Prostate gland (tissue), 2 donors: ENCODE measurements at regions of chr4 and their contacts with region 1.

Region 1: GRCh38 chr4:55020106-55020505 is 105.3 kb downstream of the KDR start:
- DNase-seq: no peak
- H3K4me3 ChIP-seq: no peak overlapping the region
- H3K27ac ChIP-seq: no peak overlapping the region
- H3K4me1 ChIP-seq: no peaks in the 10 kb centered on the region
- H3K27me3 ChIP-seq: no peaks in the 10 kb centered on the region
- CTCF ChIP-seq: no peak
- POLR2A ChIP-seq: no peak

Region 2: GRCh38 chr4:53377319-53378170 is 1642.6 kb before region 1 on chr4 and contains the start of gene FIP1L1:
- intact Hi-C with region 1: loop called (anchors 10 kb)
- DNase-seq: peak; percentile 94
- H3K4me3 ChIP-seq: peak within 1 kb of the TSS; percentile 87 to 93
- H3K27ac ChIP-seq: peak within 1 kb of the TSS; percentile 83 to 87
- H3K4me1 ChIP-seq: peaks cover 3% of the 10 kb centered on the region
- H3K27me3 ChIP-seq: no peaks in the 10 kb centered on the region
- CTCF ChIP-seq: peak in 2 of 4 experiments; percentile 24 to 30
- POLR2A ChIP-seq: peak; percentile 90
- total RNA-seq, gene FIP1L1: 41.0 to 63.5 TPM

Region 3: DNA sequence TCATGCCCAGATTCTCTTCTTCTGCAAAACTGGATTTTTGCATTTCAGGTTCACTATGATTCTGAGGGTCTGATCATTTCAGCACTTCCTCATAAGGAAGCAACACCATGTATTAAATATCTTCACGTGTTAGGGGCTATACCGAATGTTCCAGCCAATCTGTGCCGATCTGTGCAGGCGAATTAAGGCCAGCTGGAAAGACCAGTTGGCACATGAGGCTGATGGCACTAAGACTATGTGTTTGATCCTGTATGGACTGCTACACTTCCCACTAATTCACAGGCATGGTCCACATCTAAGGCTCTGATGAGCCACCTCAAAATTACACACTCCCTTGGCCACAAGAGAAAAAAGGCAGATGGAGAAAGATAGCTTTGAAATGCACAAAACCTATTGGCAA is 76.5 kb after region 1 on chr4:
- intact Hi-C with region 1: no loop called
- DNase-seq: no peak
- H3K4me3 ChIP-seq: no peak overlapping the region
- H3K27ac ChIP-seq: no peak overlapping the region
- H3K4me1 ChIP-seq: no peaks in the 10 kb centered on the region
- H3K27me3 ChIP-seq: no peaks in the 10 kb centered on the region
- CTCF ChIP-seq: no peak
- POLR2A ChIP-seq: no peak

Region 4: DNA sequence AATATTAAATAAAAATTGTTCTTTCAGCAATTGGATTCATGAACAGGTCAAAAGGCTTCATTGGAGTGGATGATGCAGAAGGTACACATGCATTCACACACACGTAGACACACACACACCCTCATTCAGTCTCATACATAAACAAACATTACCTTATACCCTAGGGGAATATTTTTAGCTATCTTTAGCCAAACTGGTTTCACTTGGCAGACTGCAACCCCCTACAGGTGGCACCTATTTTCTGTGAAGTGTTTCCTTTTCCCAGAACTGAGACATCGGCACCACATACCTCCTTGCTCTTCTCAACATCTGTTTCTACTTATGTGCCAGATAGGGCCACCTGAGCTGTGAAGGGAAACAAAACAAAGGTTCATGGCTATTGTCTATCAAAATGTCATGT is 123.8 kb after region 1 on chr4:
- intact Hi-C with region 1: no loop called
- DNase-seq: no peak
- H3K4me3 ChIP-seq: no peak overlapping the region
- H3K27ac ChIP-seq: no peak overlapping the region
- H3K4me1 ChIP-seq: no peaks in the 10 kb centered on the region
- H3K27me3 ChIP-seq: no peaks in the 10 kb centered on the region
- CTCF ChIP-seq: no peak
- POLR2A ChIP-seq: no peak

Region 5: GRCh38 chr4:55186123-55186522 is 166.0 kb after region 1 on chr4:
- intact Hi-C with region 1: no loop called
- DNase-seq: no peak
- H3K4me3 ChIP-seq: no peak overlapping the region
- H3K27ac ChIP-seq: no peak overlapping the region
- H3K4me1 ChIP-seq: no peaks in the 10 kb centered on the region
- H3K27me3 ChIP-seq: no peaks in the 10 kb centered on the region
- CTCF ChIP-seq: no peak
- POLR2A ChIP-seq: no peak

Region 6: DNA sequence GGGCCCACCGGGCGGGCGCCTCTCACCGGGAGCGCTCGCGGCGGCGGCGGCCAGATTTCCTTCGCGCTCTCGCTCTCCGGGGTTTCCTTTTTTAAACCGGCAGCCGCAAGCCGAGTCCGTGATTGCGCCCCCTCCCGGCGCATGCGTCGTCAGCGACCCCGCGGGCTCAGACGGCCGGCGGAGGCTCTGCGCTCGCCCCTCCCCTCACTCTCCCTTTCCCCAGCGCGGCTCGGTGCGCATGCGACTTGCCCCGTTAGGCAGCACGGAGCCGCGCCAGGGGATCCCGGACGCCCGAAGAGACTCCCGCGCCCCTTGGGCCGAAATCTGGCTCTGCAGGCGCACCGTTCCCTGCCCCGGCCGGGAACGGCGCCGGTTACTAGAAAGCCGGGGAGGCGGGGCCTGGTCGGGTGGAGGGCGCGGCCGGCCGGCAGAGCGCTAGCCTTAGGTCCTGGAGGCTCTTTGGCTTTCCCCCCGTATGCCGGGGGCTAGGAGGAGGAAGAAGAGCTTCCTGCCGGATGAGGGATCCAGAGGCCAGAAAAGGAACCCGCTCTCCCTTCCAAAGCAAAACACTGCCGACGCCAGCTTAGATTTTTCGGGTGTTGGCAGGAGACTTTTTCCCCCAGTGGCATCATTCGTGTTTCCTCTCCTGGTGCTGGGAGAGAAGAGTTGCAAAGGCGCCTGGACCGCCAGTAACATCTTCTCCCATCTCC is 526.8 kb after region 1 on chr4 and contains the start of gene CLOCK:
- intact Hi-C with region 1: no loop called
- DNase-seq: peak; percentile 74
- H3K4me3 ChIP-seq: peak within 1 kb of the TSS; percentile 72 to 92
- H3K27ac ChIP-seq: peak within 1 kb of the TSS; percentile 96 to 99
- H3K4me1 ChIP-seq: peaks cover 3% of the 10 kb centered on the region
- H3K27me3 ChIP-seq: no peaks in the 10 kb centered on the region
- CTCF ChIP-seq: peak in 3 of 4 experiments; percentile 57 to 75 (median 71)
- POLR2A ChIP-seq: peak; percentile 52
- total RNA-seq, gene CLOCK: 19.5 to 25.4 TPM